Activated T-helper 2 cell treated with anti-CD3 and anti-CD28 coated beads, Interferon-gamma antibody, Interleukin-2, Interleukin-4, amounts not matched to agents 10 μg/mL and 5 μg/mL and 100 μg/mL, durations not matched to agents 14 hours and 24 hours and 36 hours (primary cell): ENCODE measurements at regions of chr5 and their contacts with region 1.

Region 1: GRCh38 chr5:95822542-95823181 is at the start of gene GLRX:
- DNase-seq: peak; percentile 56
- H3K4me3 Mint-ChIP-seq: peak within 1 kb of the TSS; percentile 91
- H3K27ac Mint-ChIP-seq: peak within 1 kb of the TSS; percentile 80
- H3K4me1 Mint-ChIP-seq: peaks cover 55% of the 10 kb centered on the region
- H3K27me3 Mint-ChIP-seq: no peaks in the 10 kb centered on the region
- total RNA-seq, gene GLRX: 14.9 and 18.5 TPM in 2 replicates

Region 2: DNA sequence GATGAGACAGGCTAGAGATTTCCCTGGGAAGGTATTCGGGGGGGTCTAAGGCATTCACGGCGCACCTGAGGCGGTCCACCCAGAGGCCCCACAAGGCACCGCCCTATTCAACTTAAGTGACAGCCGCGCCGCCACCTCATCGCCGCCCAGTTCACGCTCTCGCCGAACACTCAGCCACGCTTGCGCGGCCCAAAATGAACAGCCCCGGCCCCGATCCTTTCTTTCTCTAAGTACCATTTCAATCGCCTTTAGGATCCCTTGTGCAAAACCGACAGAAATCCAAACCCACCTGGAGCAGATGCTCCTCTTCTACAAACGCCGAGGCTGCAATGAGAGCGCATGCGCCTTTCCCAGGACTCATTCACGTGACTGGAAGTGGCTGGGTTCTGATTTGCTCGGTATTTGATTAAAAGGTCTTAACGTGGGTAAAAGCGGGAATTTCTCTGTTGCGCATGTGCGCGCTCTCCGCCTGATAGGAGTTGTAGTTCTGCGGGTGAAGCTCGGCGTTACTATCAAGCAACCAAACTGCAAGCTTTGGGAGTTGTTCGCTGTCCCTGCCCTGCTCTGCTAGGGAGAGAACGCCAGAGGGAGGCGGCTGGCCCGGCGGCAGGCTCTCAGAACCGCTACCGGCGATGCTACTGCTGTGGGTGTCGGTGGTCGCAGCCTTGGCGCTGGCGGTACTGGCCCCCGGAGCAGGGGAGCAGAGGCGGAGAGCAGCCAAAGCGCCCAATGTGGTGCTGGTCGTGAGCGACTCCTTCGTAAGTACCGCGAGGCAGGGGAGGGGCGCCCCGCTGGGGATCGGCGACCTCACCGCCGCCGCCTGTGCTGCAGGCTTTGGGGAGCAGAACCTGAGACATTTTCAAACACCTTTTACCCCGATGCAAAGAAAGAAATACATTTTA is 267.8 kb before region 1 on chr5 and contains the starts of genes ARSK and SKIC3:
- intact Hi-C with region 1: loop called (anchors 10 kb)
- DNase-seq: peak; percentile 93
- H3K4me3 Mint-ChIP-seq: peak within 1 kb of the TSS; percentile 93
- H3K27ac Mint-ChIP-seq: peak within 1 kb of the TSS; percentile 81
- H3K4me1 Mint-ChIP-seq: peaks cover 39% of the 10 kb centered on the region
- H3K27me3 Mint-ChIP-seq: no peaks in the 10 kb centered on the region
- total RNA-seq, gene ARSK: 4.0 and 4.6 TPM in 2 replicates
- total RNA-seq, gene SKIC3: 60.2 and 61.6 TPM in 2 replicates

Region 3: DNA sequence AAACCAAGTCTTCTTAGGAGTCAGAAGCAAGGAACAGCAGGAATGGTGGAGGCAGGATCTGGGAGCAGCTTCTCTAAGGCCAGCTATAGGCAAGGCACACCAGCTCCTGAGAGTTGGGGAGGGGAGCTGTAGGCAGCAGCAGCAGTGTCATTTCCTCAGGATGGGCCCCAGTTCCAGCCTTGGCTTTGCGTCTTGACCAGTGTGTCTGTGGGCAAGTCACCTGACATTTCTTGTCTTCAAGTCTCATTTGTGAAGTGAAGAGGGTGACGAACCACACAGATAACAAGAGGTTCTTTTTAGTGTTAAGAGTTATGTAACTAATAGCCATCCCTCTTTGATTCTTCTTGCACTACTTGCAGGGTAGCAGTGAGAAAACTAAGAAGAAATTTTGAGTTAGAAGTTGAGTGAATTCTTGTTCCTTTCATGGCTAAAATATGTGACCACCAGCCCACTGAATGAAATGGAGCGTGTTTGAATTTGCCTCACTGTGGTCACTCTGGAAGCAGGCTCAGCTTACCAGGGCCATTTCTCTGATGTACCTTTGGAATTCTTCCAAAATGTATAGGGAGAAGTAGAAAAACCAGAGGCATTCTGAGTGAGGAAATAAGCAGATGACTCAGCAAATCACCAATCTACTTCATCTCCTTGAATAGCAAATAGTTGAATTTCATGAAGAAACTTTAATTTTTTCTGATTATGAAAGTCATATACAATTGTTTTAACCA is 49.2 kb before region 1 on chr5:
- intact Hi-C with region 1: no loop called
- DNase-seq: no peak
- H3K4me3 Mint-ChIP-seq: no peak overlapping the region
- H3K27ac Mint-ChIP-seq: no peak overlapping the region
- H3K4me1 Mint-ChIP-seq: peaks cover 2% of the 10 kb centered on the region
- H3K27me3 Mint-ChIP-seq: peaks cover 31% of the 10 kb centered on the region

Region 4: DNA sequence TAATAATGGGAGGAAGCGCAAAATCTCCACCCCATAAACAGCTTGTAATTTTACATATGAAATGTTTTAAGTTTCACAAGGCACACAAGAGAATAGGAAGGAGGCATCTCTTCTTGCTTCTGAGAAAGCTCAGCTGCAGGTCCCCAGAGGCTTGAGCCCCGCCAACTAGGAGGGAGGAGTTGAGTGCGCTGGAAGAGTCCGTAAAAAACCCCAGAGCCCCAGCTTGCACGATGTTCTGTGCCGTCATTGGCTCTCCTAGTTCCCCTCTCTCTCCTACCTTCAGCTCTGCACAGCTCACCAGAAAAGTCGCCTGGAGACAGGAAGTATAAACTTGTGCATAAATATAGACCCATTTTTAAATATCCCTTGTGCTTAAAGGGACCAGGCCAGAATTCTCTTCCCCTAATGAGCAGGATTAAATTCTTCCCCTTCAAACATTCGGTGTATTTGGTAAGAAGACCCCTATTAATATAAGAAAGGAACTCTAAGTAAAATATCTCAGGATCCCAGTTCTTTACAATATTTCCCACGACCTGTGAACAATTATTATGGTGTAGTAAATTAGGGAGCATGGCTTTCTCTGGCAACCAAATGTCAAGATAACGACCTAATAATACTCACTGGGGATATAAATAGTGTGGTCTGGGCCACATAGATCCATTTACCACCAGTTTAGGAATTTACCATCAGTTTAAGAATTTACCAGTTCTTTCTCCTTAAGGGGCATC is 13.8 kb before region 1 on chr5:
- intact Hi-C with region 1: loop called (anchors 1 kb)
- DNase-seq: peak; percentile 74
- H3K4me3 Mint-ChIP-seq: peak overlapping the region; percentile 5
- H3K27ac Mint-ChIP-seq: peak overlapping the region; percentile 60
- H3K4me1 Mint-ChIP-seq: peaks cover 49% of the 10 kb centered on the region
- H3K27me3 Mint-ChIP-seq: no peaks in the 10 kb centered on the region

Region 5: DNA sequence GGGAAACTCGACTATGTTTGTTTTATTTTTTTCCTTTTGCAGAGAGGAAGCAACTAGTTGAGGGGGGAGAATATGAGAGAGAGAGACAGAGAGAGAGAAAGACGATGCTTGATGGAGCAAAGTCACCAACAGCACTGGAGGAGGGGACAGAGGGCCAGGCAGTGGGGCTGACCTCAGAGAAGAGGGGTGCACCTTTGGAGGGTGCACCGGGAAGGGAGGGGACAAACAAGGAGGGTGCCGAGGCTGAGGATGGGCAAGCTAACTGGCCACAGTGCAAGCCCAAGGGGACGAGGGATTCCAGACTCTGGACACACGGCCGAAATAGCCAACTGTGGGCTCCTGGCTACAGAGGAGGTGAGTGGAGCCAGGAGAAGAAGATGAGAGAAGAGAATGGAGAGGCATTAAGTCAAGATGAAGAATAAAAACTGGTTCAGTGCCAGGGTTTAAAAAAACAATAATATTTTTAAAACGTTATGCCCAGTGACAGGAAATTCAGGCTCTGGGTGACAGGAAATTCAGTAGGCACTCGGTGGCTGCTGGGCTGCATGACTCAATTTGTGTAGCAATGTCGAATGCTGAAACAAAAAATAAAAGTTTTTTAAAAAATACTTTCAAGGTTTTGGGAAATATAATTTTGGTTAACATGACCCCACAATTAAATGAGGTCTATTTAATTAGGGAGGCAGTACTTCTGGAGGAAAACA is 13.2 kb after region 1 on chr5:
- intact Hi-C with region 1: loop called (anchors 1 kb)
- DNase-seq: no peak
- H3K4me3 Mint-ChIP-seq: peak overlapping the region; percentile 72
- H3K27ac Mint-ChIP-seq: peak overlapping the region; percentile 43
- H3K4me1 Mint-ChIP-seq: peaks cover 39% of the 10 kb centered on the region
- H3K27me3 Mint-ChIP-seq: no peaks in the 10 kb centered on the region

Region 6: GRCh38 chr5:95858661-95859326 is 36.1 kb after region 1 on chr5:
- intact Hi-C with region 1: no loop called
- DNase-seq: peak; percentile 84
- H3K4me3 Mint-ChIP-seq: peak overlapping the region; percentile 38
- H3K27ac Mint-ChIP-seq: peak overlapping the region; percentile 80
- H3K4me1 Mint-ChIP-seq: peaks cover 52% of the 10 kb centered on the region
- H3K27me3 Mint-ChIP-seq: no peaks in the 10 kb centered on the region

Region 7: DNA sequence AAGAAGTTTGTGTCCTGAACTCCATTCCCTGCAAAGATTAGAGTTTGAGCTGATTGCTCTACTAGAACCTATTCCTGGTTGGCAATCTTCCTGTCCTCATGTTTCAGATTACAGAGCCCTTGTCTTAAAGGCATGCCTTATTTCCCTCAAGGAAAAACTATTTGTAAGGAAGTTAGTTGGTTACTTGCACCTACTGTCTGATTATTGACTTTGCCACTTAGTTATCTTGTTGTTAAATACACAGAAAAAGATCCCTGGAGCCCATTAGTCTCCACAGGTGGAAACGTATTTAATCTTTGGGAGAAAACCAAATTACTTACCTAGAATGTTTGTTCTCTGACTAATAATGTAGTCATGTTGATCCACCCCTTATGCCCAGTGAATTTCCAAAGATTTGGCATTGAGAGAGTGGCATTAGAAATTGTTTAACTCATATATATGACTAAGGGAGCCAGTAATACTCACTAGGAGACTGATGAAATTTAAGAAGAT is 271.3 kb after region 1 on chr5:
- intact Hi-C with region 1: no loop called
- DNase-seq: no peak
- H3K4me3 Mint-ChIP-seq: no peak overlapping the region
- H3K27ac Mint-ChIP-seq: no peak overlapping the region
- H3K4me1 Mint-ChIP-seq: no peaks in the 10 kb centered on the region
- H3K27me3 Mint-ChIP-seq: no peaks in the 10 kb centered on the region

Region 8: DNA sequence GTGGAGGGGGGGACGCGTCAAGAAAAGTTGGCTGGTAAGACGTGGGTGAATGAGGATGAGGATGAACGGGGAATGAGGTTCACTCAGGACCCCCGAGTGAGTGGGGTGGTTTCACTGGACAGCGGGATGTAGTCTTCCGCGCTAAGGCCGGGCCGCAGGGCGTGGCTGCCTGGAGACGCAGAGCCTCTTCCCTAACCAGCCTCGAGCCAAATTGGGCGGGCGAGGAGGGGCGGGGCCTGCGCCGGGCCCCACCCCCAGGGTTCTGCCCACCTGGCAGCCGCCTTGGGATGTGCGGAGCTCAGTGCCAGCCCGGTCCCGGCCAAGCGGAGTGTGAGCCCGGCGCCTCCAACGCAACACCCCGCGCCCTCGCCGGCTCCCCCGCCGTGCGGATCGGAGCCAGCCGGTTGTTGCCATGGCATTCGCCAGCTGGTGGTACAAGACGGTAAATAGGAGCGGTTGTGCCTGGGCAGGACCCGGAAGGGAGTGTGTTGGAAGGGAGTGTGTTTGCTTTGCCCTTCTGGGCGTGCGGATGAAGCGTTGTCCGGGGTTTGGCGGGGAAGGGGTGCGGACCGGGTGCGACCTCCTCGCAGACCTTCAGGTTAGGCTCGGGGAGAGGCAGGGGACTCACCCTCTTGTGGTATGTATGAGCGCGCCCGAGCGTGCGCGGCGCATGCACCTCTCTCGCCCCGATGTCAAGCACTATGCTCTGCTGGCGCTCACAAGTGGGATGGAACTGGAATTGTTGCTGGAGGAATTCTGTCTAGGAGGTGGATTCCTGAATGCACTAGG is 840.3 kb after region 1 on chr5:
- intact Hi-C with region 1: loop called (anchors 5 kb)
- DNase-seq: peak; percentile 82
- H3K4me3 Mint-ChIP-seq: peak overlapping the region; percentile 90
- H3K27ac Mint-ChIP-seq: peak overlapping the region; percentile 96
- H3K4me1 Mint-ChIP-seq: peaks cover 55% of the 10 kb centered on the region
- H3K27me3 Mint-ChIP-seq: peaks cover 26% of the 10 kb centered on the region